ENCODE measurements at regions of chrX and their contacts with region 1.

Region 1: GRCh38 chrX:118603981-118604380 is 108.4 kb downstream of the DOCK11 start:
- DNase-seq: peak in 12 of 14 experiments; percentile 1 to 67 (median 11)
- ATAC-seq: peak; percentile 76
- H3K4me3 ChIP-seq: no peak overlapping the region
- H3K4me3 Mint-ChIP-seq: no peak overlapping the region
- H3K27ac ChIP-seq: no peak overlapping the region
- H3K27ac Mint-ChIP-seq: peak overlapping the region; percentile 40
- H3K4me1 ChIP-seq: peaks cover 2% of the 10 kb centered on the region
- H3K4me1 Mint-ChIP-seq: peaks cover 16% of the 10 kb centered on the region
- H3K27me3 ChIP-seq: no peaks in the 10 kb centered on the region
- H3K27me3 Mint-ChIP-seq: no peaks in the 10 kb centered on the region
- CTCF ChIP-seq: peak; percentile 72

Region 2: DNA sequence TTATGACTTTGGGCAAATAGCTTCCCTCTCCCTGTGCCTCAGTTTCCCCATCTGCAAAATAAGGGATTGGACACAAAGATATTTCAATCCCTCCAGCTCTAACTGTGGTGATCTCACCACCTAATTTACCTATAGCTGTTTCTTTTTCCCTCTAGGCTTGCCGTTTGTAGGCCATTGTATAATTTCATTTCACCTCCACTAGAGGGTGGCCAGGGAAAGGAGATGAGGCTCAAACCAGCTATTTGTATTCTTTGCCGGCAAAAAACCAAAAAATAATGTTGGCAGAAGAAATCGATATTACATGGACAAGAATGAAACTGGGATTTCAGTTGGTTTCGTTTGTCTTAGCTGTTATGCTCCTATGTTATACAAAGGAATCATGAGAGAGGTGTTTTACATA is 144.5 kb before region 1 on chrX:
- CTCF ChIA-PET with region 1: interaction called, 31 read pairs
- POLR2A ChIA-PET with region 1: no interaction called
- intact Hi-C with region 1: loop called (anchors 1 to 2 kb)
- DNase-seq: peak in 8 of 14 experiments; percentile 0 to 65 (median 14)
- ATAC-seq: peak; percentile 67
- H3K4me3 ChIP-seq: no peak overlapping the region
- H3K4me3 Mint-ChIP-seq: no peak overlapping the region
- H3K27ac ChIP-seq: no peak overlapping the region
- H3K27ac Mint-ChIP-seq: no peak overlapping the region
- H3K4me1 ChIP-seq: no peaks in the 10 kb centered on the region
- H3K4me1 Mint-ChIP-seq: peaks cover 6% of the 10 kb centered on the region
- H3K27me3 ChIP-seq: no peaks in the 10 kb centered on the region
- H3K27me3 Mint-ChIP-seq: no peaks in the 10 kb centered on the region
- CTCF ChIP-seq: peak; percentile 59

Region 3: GRCh38 chrX:118484220-118484903 is 119.6 kb before region 1 on chrX:
- CTCF ChIA-PET with region 1: no interaction called
- POLR2A ChIA-PET with region 1: no interaction called
- intact Hi-C with region 1: loop called in 1 of 2 experiments (anchors 5 kb)
- DNase-seq: no peak
- ATAC-seq: no peak
- H3K4me3 ChIP-seq: no peak overlapping the region
- H3K4me3 Mint-ChIP-seq: no peak overlapping the region
- H3K27ac ChIP-seq: no peak overlapping the region
- H3K27ac Mint-ChIP-seq: no peak overlapping the region
- H3K4me1 ChIP-seq: no peaks in the 10 kb centered on the region
- H3K4me1 Mint-ChIP-seq: no peaks in the 10 kb centered on the region
- H3K27me3 ChIP-seq: no peaks in the 10 kb centered on the region
- H3K27me3 Mint-ChIP-seq: no peaks in the 10 kb centered on the region
- CTCF ChIP-seq: no peak

Region 4: GRCh38 chrX:118528071-118528737 is 75.8 kb before region 1 on chrX:
- CTCF ChIA-PET with region 1: interaction called, 10 read pairs
- POLR2A ChIA-PET with region 1: no interaction called
- intact Hi-C with region 1: no loop called
- DNase-seq: peak; percentile 9 to 82 (median 40)
- ATAC-seq: peak; percentile 64
- H3K4me3 ChIP-seq: peak overlapping the region; percentile 57
- H3K4me3 Mint-ChIP-seq: peak overlapping the region; percentile 91
- H3K27ac ChIP-seq: peak overlapping the region; percentile 77 to 79
- H3K27ac Mint-ChIP-seq: peak overlapping the region; percentile 98
- H3K4me1 ChIP-seq: peaks cover 65% of the 10 kb centered on the region
- H3K4me1 Mint-ChIP-seq: peaks cover 82% of the 10 kb centered on the region
- H3K27me3 ChIP-seq: no peaks in the 10 kb centered on the region
- H3K27me3 Mint-ChIP-seq: no peaks in the 10 kb centered on the region
- CTCF ChIP-seq: no peak

Region 5: DNA sequence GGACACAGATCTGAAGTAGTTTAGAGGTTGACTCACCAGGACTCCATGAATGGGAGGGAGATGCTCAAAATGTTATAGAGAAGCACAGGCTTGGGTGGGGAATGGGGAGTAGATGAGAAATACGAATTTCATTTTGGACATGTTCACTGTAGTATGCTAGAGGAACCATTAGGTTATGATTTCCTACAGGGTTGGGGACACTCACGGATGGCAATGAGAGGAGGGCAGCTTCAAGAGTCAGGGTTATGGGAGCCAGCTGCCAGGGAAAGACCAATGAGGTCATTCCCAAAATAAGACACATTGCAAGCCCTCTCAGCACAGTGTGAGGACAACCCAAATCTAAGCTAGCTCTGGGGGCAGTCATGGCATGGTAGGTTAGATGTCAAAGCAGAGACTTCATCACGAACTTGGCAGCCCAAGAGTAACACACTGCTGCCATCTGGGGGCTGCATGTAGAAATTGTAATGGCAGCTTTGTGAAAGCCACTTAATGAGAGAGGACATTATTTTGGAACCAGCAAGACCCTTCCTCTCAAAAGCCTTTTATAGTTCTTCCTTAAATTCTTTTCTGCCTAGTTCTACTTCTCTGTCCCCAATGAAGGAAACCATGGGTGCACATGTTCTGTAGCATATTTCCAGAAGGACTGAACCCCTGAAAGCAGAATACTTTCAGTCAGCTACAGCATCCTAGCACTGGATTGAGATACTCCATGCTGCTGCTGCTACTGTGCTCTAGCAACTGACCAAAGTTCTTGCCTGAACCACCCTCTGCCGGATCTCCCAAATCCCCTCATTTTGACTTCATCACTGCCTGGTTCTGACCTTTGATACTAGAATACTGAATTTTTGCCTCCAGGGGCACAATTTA is 203.4 kb after region 1 on chrX:
- CTCF ChIA-PET with region 1: no interaction called
- POLR2A ChIA-PET with region 1: no interaction called
- intact Hi-C with region 1: loop called in 1 of 2 experiments (anchors 5 kb)
- DNase-seq: peak in 10 of 14 experiments; percentile 4 to 62 (median 16)
- ATAC-seq: no peak
- H3K4me3 ChIP-seq: no peak overlapping the region
- H3K4me3 Mint-ChIP-seq: no peak overlapping the region
- H3K27ac ChIP-seq: no peak overlapping the region
- H3K27ac Mint-ChIP-seq: no peak overlapping the region
- H3K4me1 ChIP-seq: no peaks in the 10 kb centered on the region
- H3K4me1 Mint-ChIP-seq: no peaks in the 10 kb centered on the region
- H3K27me3 ChIP-seq: peaks cover 0 to 3% of the 10 kb centered on the region in 2 experiments
- H3K27me3 Mint-ChIP-seq: peaks cover 19% of the 10 kb centered on the region
- CTCF ChIP-seq: peak; percentile 49

Measured in CD4-positive, alpha-beta T cell (primary cell).